ENCODE measurements at regions of chrX and their contacts with region 1.

Region 1: GRCh38 chrX:20442597-20442996 is 175.9 kb upstream of the RPS6KA3 start:
- DNase-seq: peak; percentile 78 to 92 (median 88)
- ATAC-seq: peak in 1 of 2 donors; percentile 81
- H3K4me3 ChIP-seq: no peak overlapping the region
- H3K27ac ChIP-seq: no peak overlapping the region
- H3K4me1 ChIP-seq: no peaks in the 10 kb centered on the region
- H3K27me3 ChIP-seq: no peaks in the 10 kb centered on the region

Region 2: GRCh38 chrX:20101934-20102581 is 340.5 kb before region 1 on chrX:
- intact Hi-C with region 1: no loop called
- DNase-seq: no peak
- ATAC-seq: no peak
- H3K4me3 ChIP-seq: no peak overlapping the region
- H3K27ac ChIP-seq: no peak overlapping the region
- H3K4me1 ChIP-seq: no peaks in the 10 kb centered on the region
- H3K27me3 ChIP-seq: no peaks in the 10 kb centered on the region

Region 3: DNA sequence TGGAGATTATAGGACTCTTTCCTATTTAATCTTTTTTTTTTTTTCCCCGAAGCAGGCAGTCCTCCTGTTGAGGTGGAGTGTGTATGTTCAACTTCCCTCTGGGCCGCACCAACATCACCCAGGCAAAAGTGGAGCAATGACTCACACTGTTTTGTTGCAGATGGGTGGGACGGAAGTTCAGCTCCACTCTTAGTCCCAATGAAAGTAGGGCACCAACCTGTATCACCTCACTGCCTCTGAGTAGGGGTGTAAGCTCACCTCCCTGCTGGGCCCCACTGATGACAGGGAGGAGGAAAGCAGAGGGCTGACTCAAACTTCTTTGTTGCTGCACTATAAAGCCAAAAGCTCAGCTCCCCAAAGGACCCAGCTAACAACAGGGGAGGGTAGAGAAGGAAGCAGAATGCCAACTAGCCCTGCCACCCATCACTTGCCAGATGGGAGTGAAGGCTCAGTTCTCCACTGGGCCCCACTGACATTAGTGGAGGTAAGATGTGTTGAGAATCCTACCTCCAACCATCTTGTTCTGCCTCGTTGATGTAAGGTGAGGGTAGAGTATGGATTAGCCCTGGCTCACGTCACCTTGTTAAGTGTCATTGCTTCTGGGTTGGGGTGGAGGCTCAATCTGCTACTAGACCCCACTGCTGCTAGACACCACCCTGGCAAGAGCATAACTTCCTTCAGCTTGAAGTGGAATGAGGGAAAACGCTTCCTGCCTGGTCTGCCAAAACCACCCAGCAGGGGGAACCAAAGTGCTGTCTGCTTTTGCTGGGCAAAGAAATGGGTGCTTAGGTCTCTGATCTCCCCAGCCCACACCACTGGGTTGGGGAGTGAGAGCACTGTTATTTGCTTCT is 190.0 kb before region 1 on chrX:
- intact Hi-C with region 1: loop called in 3 of 4 experiments (anchors 5 to 10 kb)
- DNase-seq: peak; percentile 14 to 71 (median 69)
- ATAC-seq: peak in 1 of 2 donors; percentile 56
- H3K4me3 ChIP-seq: no peak overlapping the region
- H3K27ac ChIP-seq: no peak overlapping the region
- H3K4me1 ChIP-seq: no peaks in the 10 kb centered on the region
- H3K27me3 ChIP-seq: no peaks in the 10 kb centered on the region

Measured in right cardiac atrium (tissue), 5 donors.